ENCODE measurements at regions of chr1 and their contacts with region 1.

Region 1: DNA sequence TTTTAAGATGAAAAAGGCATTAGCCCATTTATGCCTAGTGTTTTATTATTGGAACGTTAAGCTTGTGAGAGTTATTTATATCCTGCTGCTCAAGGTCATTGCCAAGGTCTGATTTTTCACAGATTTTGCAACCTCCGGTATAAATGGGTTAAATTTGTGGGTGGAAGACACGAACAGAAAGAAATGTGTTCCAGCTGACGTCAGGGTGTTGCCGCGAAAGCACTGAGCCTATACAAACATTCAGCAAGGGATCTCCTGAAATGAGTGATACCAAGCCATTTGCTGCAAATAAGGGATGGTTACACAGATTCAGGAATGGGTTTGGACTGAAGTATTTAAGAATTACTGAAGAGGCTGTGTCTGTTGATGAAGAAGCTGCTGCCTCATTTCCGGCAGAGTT is 32.2 kb downstream of the TMED5 start:
- DNase-seq: no peak
- H3K4me3 ChIP-seq: no peak overlapping the region
- H3K27ac ChIP-seq: no peak overlapping the region
- H3K4me1 ChIP-seq: no peaks in the 10 kb centered on the region
- CTCF ChIP-seq: no peak

Region 2: DNA sequence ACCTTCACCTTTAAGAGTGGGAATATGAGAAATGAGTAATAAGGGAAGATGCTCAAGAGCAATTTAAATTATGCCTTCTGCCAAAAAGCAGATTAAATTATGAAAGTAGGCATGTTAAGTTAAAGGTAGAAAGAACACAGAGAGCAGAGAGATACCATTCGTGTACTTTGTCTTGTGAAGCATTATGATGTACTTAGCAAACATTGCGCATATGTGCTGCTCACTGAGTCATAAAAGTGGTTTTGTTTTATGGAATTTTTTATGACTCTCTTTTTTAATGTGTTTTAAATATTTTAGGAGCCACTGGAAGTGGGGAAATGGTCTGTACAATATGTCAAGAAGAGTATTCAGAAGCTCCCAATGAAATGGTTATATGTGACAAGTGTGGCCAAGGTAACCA is 33.6 kb before region 1 on chr1:
- CTCF ChIA-PET with region 1: no interaction called
- POLR2A ChIA-PET with region 1: interaction called, 10 read pairs
- intact Hi-C with region 1: no loop called
- DNase-seq: no peak
- H3K4me3 ChIP-seq: no peak overlapping the region
- H3K27ac ChIP-seq: no peak overlapping the region
- H3K4me1 ChIP-seq: peaks cover 26% of the 10 kb centered on the region
- CTCF ChIP-seq: no peak

Region 3: DNA sequence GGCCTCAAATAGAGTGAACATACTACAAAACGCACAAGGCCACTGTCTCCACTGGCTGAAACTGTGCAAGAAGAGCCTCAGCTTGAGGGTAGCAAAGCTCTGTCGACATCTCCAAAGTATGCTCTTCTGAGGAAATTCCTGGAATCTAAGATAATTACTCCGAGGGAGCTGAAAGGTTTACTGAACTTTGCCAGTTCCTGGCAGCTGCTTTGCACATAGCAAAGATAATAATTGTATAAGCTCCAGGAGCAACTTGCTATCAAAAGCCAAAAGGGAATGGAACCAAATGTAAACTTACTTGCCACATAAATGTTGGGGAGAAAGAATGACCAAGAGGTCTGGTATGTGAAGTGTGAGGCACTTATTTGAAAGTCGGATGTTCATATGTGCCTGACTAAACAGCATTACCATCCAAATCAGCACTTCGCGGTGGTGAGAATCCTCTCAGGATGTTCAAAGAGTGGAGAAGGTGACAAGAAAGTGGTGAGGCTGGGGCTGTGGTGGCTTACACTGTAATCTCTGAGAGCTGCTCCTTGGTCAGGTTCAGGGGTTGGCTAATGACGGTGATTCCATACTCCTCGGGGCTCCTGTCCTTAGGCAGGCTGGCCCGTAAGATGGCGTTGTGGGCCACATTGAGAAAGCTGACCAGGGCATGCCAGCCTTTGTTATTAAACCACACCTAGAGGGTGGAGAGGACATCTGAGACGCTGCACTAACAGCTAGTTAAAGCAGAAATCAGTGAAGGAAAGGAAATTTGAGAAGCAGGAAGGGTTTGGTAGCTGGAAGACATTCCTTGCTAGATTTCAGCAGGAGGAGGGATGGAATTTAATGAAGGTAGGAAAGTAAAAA is 873.0 kb after region 1 on chr1:
- CTCF ChIA-PET with region 1: no interaction called
- POLR2A ChIA-PET with region 1: no interaction called
- intact Hi-C with region 1: no loop called
- DNase-seq: no peak
- H3K4me3 ChIP-seq: no peak overlapping the region
- H3K27ac ChIP-seq: no peak overlapping the region
- H3K4me1 ChIP-seq: no peaks in the 10 kb centered on the region
- CTCF ChIP-seq: no peak

Measured in OCI-LY7 (cell line).